Panc1 (cell line): ENCODE measurements at regions of chr14 and their contacts with region 1.

Region 1: GRCh38 chr14:92134456-92134855 is 12.7 kb downstream of the CPSF2 start:
- DNase-seq: no peak
- ATAC-seq: no peak
- H3K4me3 ChIP-seq: no peak overlapping the region
- H3K27ac ChIP-seq: no peak overlapping the region
- H3K4me1 ChIP-seq: no peaks in the 10 kb centered on the region
- H3K27me3 ChIP-seq: no peaks in the 10 kb centered on the region
- CTCF ChIP-seq: no peak

Region 2: GRCh38 chr14:92382677-92383076 is 248.2 kb after region 1 on chr14:
- CTCF ChIA-PET with region 1: no interaction called
- POLR2A ChIA-PET with region 1: no interaction called
- in situ Hi-C with region 1: no loop called
- intact Hi-C with region 1: no loop called
- DNase-seq: no peak
- ATAC-seq: peak; percentile 78; the same call in 1 of the 2 replicates
- H3K4me3 ChIP-seq: no peak overlapping the region
- H3K27ac ChIP-seq: no peak overlapping the region
- H3K4me1 ChIP-seq: no peaks in the 10 kb centered on the region
- H3K27me3 ChIP-seq: no peaks in the 10 kb centered on the region
- CTCF ChIP-seq: peak; percentile 69; the same call in 1 of the 2 replicates

Region 3: DNA sequence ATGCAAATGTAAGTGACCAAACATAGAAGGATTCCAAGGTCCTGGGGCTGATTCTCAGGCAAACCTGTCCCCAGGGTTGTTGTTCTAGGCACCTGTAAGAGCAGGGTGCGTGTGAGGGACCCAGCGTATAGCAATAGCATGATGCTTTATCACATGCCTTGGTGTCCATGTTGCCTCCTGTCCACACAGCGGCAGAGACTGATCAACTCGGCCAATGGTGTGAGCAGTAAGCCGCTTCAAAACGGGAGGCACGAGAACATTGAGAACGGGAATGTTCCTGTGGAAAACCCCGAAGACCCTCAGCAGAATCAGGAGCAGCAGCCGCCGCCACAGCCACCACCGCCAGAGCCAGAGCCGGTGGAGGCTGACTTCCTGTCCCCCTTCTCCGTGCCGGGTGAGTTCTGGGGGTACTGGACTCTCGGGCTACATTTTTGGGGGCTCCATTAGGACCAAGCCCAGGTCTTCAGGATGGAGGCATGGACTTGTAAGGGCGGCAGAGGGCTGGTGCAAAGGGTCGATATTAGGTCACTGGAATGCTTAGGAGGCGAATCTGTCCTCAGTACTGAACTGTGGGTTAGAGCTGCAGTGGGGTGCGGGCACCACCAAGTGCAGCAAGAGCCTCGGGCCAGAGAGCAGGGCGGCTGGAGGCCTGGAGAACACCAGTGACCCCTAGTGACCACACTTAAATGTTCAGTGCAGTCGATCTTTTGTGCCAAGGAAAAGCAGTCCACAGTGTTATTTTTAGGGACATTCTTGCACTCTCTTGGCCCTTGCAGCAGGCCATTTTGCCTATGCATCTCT is 322.0 kb after region 1 on chr14:
- CTCF ChIA-PET with region 1: no interaction called
- POLR2A ChIA-PET with region 1: no interaction called
- in situ Hi-C with region 1: no loop called
- intact Hi-C with region 1: loop called (anchors 5 kb)
- DNase-seq: peak; percentile 43
- ATAC-seq: peak; percentile 87
- H3K4me3 ChIP-seq: no peak overlapping the region
- H3K27ac ChIP-seq: no peak overlapping the region
- H3K4me1 ChIP-seq: no peaks in the 10 kb centered on the region
- H3K27me3 ChIP-seq: no peaks in the 10 kb centered on the region
- CTCF ChIP-seq: peak; percentile 83